H1 (cell line): ENCODE measurements at regions of chr12 and their contacts with region 1.

Region 1: DNA sequence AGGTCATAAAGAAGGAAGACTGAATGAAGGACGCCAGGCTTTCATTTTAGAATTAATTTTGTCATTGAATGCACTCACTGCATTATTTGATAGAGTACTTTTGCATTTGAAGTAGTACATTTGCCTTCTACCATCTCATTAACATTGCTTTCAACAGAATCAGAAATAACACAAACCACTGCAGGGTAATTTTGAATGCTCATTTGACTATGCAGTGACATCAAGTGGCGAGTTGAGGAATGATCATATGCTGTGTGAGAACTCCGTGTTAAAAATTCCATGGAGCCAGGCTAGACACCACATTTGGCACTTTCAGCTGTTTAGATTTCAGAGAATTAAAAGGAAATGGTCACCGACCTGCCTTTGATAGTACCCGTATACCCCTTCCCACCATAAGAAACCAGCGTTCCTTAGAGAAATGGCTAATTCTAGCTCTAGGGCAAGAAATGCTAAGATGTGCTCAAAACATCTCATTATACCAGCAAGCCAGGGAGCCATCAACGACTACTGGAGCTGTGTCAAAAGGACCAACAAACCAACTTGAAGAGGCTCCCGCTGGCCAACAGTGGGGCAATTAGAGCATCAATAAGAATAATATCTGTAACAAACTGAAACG is 16.5 kb downstream of the HEBP1 start:
- DNase-seq: no peak
- H3K4me3 ChIP-seq: no peak overlapping the region
- H3K27ac ChIP-seq: no peak overlapping the region
- H3K4me1 ChIP-seq: peaks cover 0 to 7% (median 2%) of the 10 kb centered on the region in 4 experiments; a peak in 3 of 7 replicates
- H3K27me3 ChIP-seq: no peaks in the 10 kb centered on the region
- CTCF ChIP-seq: peak in 2 of 3 experiments; percentile 52 to 60; a peak in 3 of 4 replicates
- EP300 ChIP-seq: no peak
- POLR2A ChIP-seq: no peak
- RAD21 ChIP-seq: peak; percentile 57 to 65

Region 2: DNA sequence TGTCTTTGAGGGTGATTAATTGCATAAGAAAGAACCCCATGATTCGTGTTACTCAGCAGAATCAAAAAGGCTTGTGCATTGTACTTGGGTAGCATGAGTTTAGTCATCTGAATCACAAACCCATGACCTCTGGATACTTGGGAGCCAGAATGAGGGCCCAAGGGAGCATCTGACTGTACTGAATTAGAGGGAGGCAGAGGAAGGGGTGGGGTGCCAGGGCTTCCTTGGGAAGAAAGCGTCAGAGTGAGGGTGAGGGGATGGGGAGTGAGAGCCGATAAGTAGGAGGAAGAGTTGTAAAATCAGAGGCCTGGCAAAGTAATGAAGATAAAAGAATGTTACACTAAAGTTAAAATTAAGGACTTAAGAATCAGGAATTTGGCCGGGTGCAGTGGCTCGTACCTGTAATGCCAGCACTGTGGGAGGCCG is 61.3 kb before region 1 on chr12:
- CTCF ChIA-PET with region 1: interaction called, 118 read pairs
- POLR2A ChIA-PET with region 1: no interaction called
- DNase-seq: no peak
- H3K4me3 ChIP-seq: no peak overlapping the region
- H3K27ac ChIP-seq: no peak overlapping the region
- H3K4me1 ChIP-seq: peaks cover 0 to 4% (median 1%) of the 10 kb centered on the region in 4 experiments; a peak in 3 of 7 replicates
- H3K27me3 ChIP-seq: no peaks in the 10 kb centered on the region
- CTCF ChIP-seq: no peak
- EP300 ChIP-seq: no peak
- POLR2A ChIP-seq: no peak
- RAD21 ChIP-seq: no peak

Region 3: GRCh38 chr12:12999959-13000615 is 16.6 kb after region 1 on chr12 and contains the start of gene HEBP1:
- CTCF ChIA-PET with region 1: interaction called, 36 read pairs
- POLR2A ChIA-PET with region 1: no interaction called
- DNase-seq: peak in 1 of 2 experiments; percentile 99
- H3K4me3 ChIP-seq: peak within 1 kb of the TSS; percentile 64 to 90 (median 86)
- H3K27ac ChIP-seq: peak within 1 kb of the TSS; percentile 53; the same call in 1 of the 2 replicates
- H3K4me1 ChIP-seq: peaks cover 5 to 16% (median 7%) of the 10 kb centered on the region in 4 experiments
- H3K27me3 ChIP-seq: peaks cover 0 to 15% (median 6%) of the 10 kb centered on the region in 4 experiments; a peak in 4 of 7 replicates
- CTCF ChIP-seq: no peak
- EP300 ChIP-seq: no peak
- POLR2A ChIP-seq: peak; percentile 61 to 71
- RAD21 ChIP-seq: no peak
- total RNA-seq, gene HEBP1: 51.6 and 56.1 TPM in 2 replicates

Region 4: GRCh38 chr12:13079440-13079906 is 95.9 kb after region 1 on chr12:
- CTCF ChIA-PET with region 1: interaction called, 14 read pairs
- POLR2A ChIA-PET with region 1: no interaction called
- DNase-seq: peak in 1 of 2 experiments; percentile 19
- H3K4me3 ChIP-seq: no peak overlapping the region
- H3K27ac ChIP-seq: no peak overlapping the region
- H3K4me1 ChIP-seq: peaks cover 0 to 5% (median 2%) of the 10 kb centered on the region in 4 experiments; a peak in 3 of 7 replicates
- H3K27me3 ChIP-seq: no peaks in the 10 kb centered on the region
- CTCF ChIP-seq: peak; percentile 34 to 85 (median 72)
- EP300 ChIP-seq: no peak
- POLR2A ChIP-seq: no peak
- RAD21 ChIP-seq: peak; percentile 50 to 68